ENCODE measurements at regions of chr2 and their contacts with region 1.

Region 1: DNA sequence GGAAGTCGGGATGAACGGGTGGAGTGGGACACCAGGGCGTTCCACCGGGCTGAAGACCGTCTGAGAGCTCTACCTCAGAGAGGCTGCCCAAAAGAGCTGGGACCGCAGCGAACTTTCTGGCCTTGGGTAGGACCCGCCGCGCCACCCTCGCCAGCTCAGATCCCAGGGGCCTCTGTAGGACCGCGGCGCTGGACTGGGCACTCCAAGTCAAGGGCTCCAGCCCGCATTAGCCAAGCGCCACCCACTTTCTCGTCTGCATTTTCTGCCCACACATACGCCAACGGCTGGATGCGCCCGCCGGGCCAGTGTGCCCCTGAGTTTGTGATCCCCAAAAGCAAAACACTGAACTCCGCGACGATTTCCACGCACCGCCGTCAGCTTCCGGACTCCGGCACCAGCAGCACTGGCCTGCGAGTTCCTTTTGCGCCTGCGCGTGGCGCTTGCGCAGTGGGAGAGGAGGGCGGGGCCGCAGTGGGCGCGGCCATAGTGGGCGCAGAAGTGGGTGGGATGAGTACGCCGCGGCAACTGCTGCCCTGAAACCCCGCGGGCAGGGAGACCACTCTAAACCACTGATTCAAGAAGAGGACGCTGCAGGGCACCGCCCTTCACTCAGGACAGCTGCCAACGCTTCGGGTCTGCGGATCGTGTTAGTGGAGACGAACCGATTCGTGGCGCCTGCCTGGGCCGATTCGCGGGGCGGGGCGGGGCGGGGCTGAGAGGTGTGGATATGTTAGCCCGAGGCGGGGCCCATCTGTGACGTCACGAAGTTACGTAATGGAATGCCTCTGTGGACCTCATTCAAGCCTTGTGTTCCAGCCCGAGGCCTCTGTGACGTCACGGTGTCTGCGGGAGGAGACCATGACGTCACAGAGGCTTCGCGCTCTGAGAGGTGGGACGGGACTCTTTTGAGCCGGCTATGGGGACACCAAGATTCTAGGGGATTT is 10.5 kb downstream of the OSR1 start:
- DNase-seq: peak; percentile 97
- H3K4me3 Mint-ChIP-seq: peak overlapping the region; percentile 96
- H3K27ac Mint-ChIP-seq: peak overlapping the region; percentile 93
- H3K4me1 Mint-ChIP-seq: peaks cover 20% of the 10 kb centered on the region
- H3K27me3 Mint-ChIP-seq: peaks cover 33% of the 10 kb centered on the region

Region 2: DNA sequence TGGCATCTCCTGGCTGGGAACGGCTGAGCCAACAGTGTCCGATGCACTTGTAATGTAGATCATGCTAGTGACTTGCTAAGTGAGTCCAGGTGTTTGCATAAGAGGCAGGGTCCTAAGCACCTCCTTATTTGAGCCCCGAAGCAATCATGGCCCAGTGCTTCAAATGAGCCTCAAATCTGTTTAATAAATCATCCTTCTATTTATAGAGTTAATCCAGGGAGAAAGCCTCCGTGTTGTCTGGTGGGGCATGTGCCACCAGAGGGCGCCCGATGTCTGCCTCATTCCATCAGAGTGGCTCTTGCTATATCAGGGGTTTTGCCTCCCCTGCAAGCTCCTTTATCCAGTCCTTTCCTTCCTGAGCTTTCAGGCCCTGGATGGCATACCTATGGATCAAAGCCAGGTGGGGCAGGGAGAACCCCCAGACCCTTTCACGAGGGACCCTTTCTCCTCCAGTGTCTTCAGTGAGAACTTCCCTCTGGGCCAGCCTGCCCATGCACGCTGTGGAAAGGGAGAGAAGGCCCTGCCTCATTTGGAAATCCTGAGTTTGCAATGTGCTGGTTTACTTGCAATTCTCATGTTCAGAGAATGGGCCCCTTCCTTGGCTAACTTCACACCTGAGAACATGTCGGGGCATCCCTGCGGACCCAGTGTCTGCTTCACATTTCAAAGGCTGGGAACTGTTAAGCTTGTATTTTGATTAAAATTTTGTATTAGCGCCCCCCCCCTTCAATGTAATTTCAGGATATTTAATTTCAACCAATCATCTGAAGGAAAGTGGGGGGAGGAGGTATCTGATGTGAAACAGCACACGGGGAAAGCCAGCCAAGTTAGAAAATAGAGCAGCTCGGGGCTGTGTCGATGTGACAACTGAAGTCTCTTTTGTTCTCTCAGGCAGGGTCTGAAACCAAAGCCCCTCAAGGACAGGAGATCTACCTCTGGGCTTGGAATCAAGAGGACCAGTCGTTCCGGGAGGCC is 827.2 kb before region 1 on chr2:
- intact Hi-C with region 1: loop called (anchors 5 kb)
- DNase-seq: peak; percentile 47
- H3K4me3 Mint-ChIP-seq: no peak overlapping the region
- H3K27ac Mint-ChIP-seq: no peak overlapping the region
- H3K4me1 Mint-ChIP-seq: no peaks in the 10 kb centered on the region
- H3K27me3 Mint-ChIP-seq: peaks cover 2% of the 10 kb centered on the region

Region 3: GRCh38 chr2:19362755-19363473 is 15.0 kb after region 1 on chr2:
- intact Hi-C with region 1: loop called (anchors 1 kb)
- DNase-seq: no peak
- H3K4me3 Mint-ChIP-seq: peak overlapping the region; percentile 82
- H3K27ac Mint-ChIP-seq: no peak overlapping the region
- H3K4me1 Mint-ChIP-seq: peaks cover 25% of the 10 kb centered on the region
- H3K27me3 Mint-ChIP-seq: peaks cover 80% of the 10 kb centered on the region

Region 4: GRCh38 chr2:19442731-19443130 is 94.8 kb after region 1 on chr2:
- intact Hi-C with region 1: no loop called
- DNase-seq: no peak
- H3K4me3 Mint-ChIP-seq: no peak overlapping the region
- H3K27ac Mint-ChIP-seq: no peak overlapping the region
- H3K4me1 Mint-ChIP-seq: no peaks in the 10 kb centered on the region
- H3K27me3 Mint-ChIP-seq: no peaks in the 10 kb centered on the region

Region 5: GRCh38 chr2:19525313-19525712 is 177.4 kb after region 1 on chr2:
- intact Hi-C with region 1: no loop called
- DNase-seq: no peak
- H3K4me3 Mint-ChIP-seq: no peak overlapping the region
- H3K27ac Mint-ChIP-seq: no peak overlapping the region
- H3K4me1 Mint-ChIP-seq: no peaks in the 10 kb centered on the region
- H3K27me3 Mint-ChIP-seq: no peaks in the 10 kb centered on the region

Region 6: GRCh38 chr2:20051532-20052228 is 703.8 kb after region 1 on chr2 and contains the start of gene LAPTM4A:
- intact Hi-C with region 1: loop called (anchors 2 kb)
- DNase-seq: peak; percentile 98
- H3K4me3 Mint-ChIP-seq: no peak within 1 kb of the TSS
- H3K27ac Mint-ChIP-seq: no peak within 1 kb of the TSS
- H3K4me1 Mint-ChIP-seq: peaks cover 23% of the 10 kb centered on the region
- H3K27me3 Mint-ChIP-seq: peaks cover 18% of the 10 kb centered on the region
- total RNA-seq, gene LAPTM4A: 26.9 and 27.3 TPM in 2 replicates

Measured in activated T-helper 2 cell treated with anti-CD3 and anti-CD28 coated beads, Interferon-gamma antibody, Interleukin-2, Interleukin-4, amounts not matched to agents 10 μg/mL and 5 μg/mL and 100 μg/mL, durations not matched to agents 14 hours and 24 hours and 36 hours (primary cell).